ENCODE measurements at regions of chrX and their contacts with region 1.

Region 1: DNA sequence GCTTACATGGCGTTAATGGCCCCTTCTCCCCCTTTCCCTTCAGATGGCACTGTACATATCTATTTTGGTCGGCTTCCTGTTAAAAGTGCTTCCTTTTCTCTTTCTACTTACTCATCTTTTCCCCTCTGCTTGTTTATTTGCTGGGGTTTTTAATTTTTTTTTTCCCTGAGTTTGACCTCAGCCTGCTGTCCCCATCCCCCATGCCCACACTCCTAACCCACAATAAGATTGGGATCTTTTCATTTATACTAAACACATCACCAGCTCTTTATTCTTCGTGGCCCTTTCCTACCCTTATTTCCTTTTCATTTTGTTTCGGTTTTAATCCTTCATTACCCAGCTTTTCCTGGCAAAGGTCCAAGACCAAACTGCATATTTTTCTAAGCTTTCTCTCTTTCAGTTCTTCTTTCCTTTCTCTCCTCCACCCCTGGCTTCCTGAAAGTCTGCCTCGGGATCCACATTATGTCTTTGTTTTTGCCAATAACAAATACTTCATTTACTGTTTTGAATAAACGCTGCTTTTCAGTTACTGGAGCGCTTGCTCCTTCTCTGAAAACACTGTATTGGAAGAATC is 152.0 kb upstream of the USP9X start:
- DNase-seq: peak; percentile 26
- H3K4me3 Mint-ChIP-seq: peak overlapping the region; percentile 48
- H3K27ac Mint-ChIP-seq: peak overlapping the region; percentile 87
- H3K4me1 Mint-ChIP-seq: peaks cover 22% of the 10 kb centered on the region
- H3K27me3 Mint-ChIP-seq: no peaks in the 10 kb centered on the region

Region 2: DNA sequence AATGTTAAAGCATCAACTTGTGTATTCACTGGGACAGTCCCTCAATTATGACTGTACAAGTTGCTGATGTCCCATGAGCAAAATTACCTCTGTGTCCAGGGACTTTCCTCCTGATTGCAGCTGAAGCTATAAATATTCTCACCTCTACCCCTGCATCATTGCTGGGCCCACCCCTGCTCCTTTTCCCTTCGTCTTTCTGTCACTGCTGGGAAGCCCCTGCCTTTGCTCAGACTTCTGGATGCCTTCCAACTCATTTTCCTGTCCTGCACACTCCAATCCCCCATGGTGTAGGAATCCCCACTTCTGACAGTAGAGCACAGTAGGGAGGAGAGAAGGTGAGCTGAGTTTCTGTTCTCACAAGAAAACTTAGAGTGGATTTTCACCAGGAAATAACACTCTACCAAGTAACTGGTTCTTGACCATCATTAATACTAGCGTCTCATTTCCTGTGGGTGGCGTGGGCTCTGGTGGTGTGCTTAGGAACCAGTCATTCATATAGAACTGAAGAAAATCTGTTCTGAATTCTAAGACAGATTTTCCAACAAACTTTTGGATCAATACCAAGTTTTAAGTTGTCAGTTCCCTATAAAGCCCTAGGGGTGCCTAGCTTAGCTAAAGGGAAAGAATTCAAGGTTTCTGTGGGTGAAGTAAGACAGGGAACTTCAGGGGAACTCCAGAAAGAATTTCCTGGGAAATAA is 61.7 kb before region 1 on chrX:
- CTCF ChIA-PET with region 1: no interaction called
- intact Hi-C with region 1: loop called (anchors 1 kb)
- DNase-seq: peak; percentile 72
- H3K4me3 Mint-ChIP-seq: no peak overlapping the region
- H3K27ac Mint-ChIP-seq: peak overlapping the region; percentile 88
- H3K4me1 Mint-ChIP-seq: peaks cover 12% of the 10 kb centered on the region
- H3K27me3 Mint-ChIP-seq: no peaks in the 10 kb centered on the region

Region 3: GRCh38 chrX:40952855-40953254 is 19.6 kb after region 1 on chrX:
- CTCF ChIA-PET with region 1: interaction called, 3 read pairs
- intact Hi-C with region 1: loop called (anchors 2 kb)
- DNase-seq: peak; percentile 33
- H3K4me3 Mint-ChIP-seq: peak overlapping the region; percentile 29
- H3K27ac Mint-ChIP-seq: no peak overlapping the region
- H3K4me1 Mint-ChIP-seq: peaks cover 11% of the 10 kb centered on the region
- H3K27me3 Mint-ChIP-seq: no peaks in the 10 kb centered on the region

Measured in activated naive CD4-positive, alpha-beta T cell treated with anti-CD3 and anti-CD28 coated beads for 36 hours (primary cell).